ENCODE measurements at regions of chr14 and their contacts with region 1.

Region 1: DNA sequence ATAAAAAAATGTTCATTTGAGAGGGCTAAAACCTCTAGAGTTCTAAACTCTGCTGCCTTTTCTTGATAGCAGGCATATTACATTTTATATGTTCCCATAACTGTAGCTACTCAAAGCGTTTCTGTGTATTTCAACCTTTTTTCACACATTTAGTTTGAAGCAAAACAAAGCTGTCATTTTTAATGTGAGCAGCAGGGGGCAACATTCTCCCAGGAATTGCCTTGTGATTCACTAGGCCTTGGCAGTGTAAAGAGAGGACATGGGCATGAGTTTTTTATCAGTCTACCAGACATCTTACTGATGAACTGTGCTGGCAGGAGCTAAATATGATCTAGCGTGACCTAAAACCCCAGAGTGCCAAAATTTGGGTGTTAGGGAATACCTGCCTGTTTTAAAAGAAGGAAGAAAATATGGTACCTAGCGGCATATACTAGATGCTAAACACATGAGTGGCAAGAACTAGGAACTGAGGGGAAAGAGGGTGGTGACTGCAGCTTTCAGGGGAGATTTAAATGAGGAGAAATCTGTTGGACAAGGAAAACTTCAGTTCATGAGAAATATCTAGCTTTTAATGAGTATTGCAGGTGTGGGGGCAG is 65.3 kb downstream of the IFT43 start:
- DNase-seq: peak; percentile 72
- ATAC-seq: peak; percentile 49
- H3K4me3 Mint-ChIP-seq: no peak overlapping the region
- H3K27ac Mint-ChIP-seq: no peak overlapping the region
- H3K4me1 Mint-ChIP-seq: no peaks in the 10 kb centered on the region
- H3K27me3 Mint-ChIP-seq: no peaks in the 10 kb centered on the region

Region 2: GRCh38 chr14:75794615-75795038 is 256.3 kb before region 1 on chr14:
- CTCF ChIA-PET with region 1: no interaction called
- POLR2A ChIA-PET with region 1: no interaction called
- DNase-seq: no peak
- ATAC-seq: no peak
- H3K4me3 Mint-ChIP-seq: no peak overlapping the region
- H3K27ac Mint-ChIP-seq: no peak overlapping the region
- H3K4me1 Mint-ChIP-seq: no peaks in the 10 kb centered on the region
- H3K27me3 Mint-ChIP-seq: no peaks in the 10 kb centered on the region

Region 3: GRCh38 chr14:76015668-76016067 is 35.2 kb before region 1 on chr14:
- CTCF ChIA-PET with region 1: no interaction called
- POLR2A ChIA-PET with region 1: no interaction called
- DNase-seq: no peak
- ATAC-seq: no peak
- H3K4me3 Mint-ChIP-seq: no peak overlapping the region
- H3K27ac Mint-ChIP-seq: no peak overlapping the region
- H3K4me1 Mint-ChIP-seq: no peaks in the 10 kb centered on the region
- H3K27me3 Mint-ChIP-seq: no peaks in the 10 kb centered on the region

Region 4: GRCh38 chr14:76034566-76034965 is 16.3 kb before region 1 on chr14:
- CTCF ChIA-PET with region 1: interaction called, 15 read pairs
- POLR2A ChIA-PET with region 1: no interaction called
- DNase-seq: no peak
- ATAC-seq: no peak
- H3K4me3 Mint-ChIP-seq: no peak overlapping the region
- H3K27ac Mint-ChIP-seq: no peak overlapping the region
- H3K4me1 Mint-ChIP-seq: no peaks in the 10 kb centered on the region
- H3K27me3 Mint-ChIP-seq: no peaks in the 10 kb centered on the region

Region 5: GRCh38 chr14:76305268-76305826 is 254.5 kb after region 1 on chr14:
- CTCF ChIA-PET with region 1: no interaction called
- POLR2A ChIA-PET with region 1: no interaction called
- DNase-seq: no peak
- ATAC-seq: no peak
- H3K4me3 Mint-ChIP-seq: no peak overlapping the region
- H3K27ac Mint-ChIP-seq: no peak overlapping the region
- H3K4me1 Mint-ChIP-seq: no peaks in the 10 kb centered on the region
- H3K27me3 Mint-ChIP-seq: peaks cover 20% of the 10 kb centered on the region

Region 6: DNA sequence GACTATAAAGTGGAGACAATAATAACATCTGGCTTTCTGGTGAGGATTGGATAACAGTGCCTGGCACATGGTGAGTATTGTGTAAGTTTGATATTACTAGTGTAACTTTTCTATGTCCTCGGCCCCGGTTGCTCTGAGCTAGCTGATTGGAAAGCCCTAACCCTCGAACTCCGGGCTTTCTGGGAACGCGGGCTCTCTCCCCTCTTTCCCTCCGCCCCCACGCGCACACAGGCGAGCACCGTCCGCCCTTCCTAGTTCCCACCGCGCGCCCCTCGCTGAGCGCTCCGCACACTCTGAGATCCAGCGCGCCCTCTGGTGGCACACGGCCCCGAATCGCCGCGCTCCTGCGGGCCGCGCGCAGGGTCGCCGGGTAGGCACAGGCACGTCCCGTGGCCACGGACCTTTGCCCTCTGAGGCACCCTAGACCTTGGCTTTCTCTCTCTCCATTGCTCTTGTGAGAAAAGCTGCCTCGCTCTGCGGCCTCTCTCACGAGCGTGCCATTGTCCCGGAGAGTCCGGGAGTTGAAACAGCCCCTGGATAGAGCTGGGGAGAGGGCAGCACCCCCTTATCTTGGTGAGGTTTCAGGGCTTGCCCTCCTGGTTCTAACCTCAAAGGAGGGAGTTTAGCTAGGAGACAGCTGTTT is 301.9 kb after region 1 on chr14:
- CTCF ChIA-PET with region 1: interaction called, 75 read pairs
- POLR2A ChIA-PET with region 1: no interaction called
- DNase-seq: peak; percentile 65
- ATAC-seq: peak; percentile 91
- H3K4me3 Mint-ChIP-seq: no peak overlapping the region
- H3K27ac Mint-ChIP-seq: no peak overlapping the region
- H3K4me1 Mint-ChIP-seq: peaks cover 3% of the 10 kb centered on the region
- H3K27me3 Mint-ChIP-seq: peaks cover 7% of the 10 kb centered on the region

Region 7: DNA sequence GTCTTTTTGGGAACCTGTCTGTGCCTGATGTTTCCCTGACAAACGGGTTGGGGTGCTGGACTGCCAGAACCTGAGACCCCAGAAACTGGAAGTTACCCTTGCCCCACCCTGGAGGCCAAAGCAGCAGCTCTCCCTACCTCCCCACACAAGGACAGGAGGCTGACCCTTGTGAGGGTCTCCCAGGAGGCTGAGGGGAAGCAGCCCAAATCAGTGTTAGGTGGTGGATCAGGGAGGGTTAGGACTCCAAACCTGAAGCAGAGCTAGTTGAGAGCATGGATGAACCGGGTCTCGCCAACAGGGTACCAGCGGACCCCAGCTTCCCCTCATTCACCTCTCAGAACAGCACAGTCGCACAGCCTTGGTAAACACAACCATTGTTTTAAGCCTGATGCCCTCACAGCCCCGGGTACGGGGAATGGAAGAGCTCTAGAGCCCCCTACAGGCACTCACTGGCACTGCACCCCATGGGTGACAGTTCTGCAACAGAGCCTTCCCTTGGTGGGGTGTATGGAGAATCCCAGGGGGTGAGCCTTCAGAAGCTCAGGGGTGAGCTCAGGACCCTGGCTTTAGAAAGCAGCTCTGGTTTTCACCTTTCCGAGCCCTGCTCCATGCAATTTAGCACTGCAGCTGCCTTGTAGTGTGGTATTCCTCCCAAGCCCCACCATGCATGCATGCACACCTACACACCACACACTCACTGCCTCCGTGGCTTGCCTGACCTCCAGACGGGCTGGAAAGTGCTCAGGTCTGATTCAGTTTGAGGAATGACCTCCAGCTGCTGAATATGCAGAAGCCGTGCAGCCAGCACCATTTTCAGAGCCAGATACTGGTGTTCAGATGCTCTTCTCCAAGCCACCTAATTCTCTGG is 336.3 kb after region 1 on chr14:
- CTCF ChIA-PET with region 1: interaction called, 33 read pairs
- POLR2A ChIA-PET with region 1: interaction called, 3 read pairs
- DNase-seq: peak; percentile 77
- ATAC-seq: peak; percentile 97
- H3K4me3 Mint-ChIP-seq: no peak overlapping the region
- H3K27ac Mint-ChIP-seq: no peak overlapping the region
- H3K4me1 Mint-ChIP-seq: no peaks in the 10 kb centered on the region
- H3K27me3 Mint-ChIP-seq: peaks cover 31% of the 10 kb centered on the region

Measured in activated CD8-positive, alpha-beta T cell treated with anti-CD3 and anti-CD28 coated beads, Interleukin-2, amount 10 ng/mL, durations not matched to agents 7 days and 5 days (primary cell).